Activated CD4-positive, alpha-beta memory T cell treated with anti-CD3 and anti-CD28 coated beads for 36 hours (primary cell): ENCODE measurements at regions of chr5 and their contacts with region 1.

Region 1: DNA sequence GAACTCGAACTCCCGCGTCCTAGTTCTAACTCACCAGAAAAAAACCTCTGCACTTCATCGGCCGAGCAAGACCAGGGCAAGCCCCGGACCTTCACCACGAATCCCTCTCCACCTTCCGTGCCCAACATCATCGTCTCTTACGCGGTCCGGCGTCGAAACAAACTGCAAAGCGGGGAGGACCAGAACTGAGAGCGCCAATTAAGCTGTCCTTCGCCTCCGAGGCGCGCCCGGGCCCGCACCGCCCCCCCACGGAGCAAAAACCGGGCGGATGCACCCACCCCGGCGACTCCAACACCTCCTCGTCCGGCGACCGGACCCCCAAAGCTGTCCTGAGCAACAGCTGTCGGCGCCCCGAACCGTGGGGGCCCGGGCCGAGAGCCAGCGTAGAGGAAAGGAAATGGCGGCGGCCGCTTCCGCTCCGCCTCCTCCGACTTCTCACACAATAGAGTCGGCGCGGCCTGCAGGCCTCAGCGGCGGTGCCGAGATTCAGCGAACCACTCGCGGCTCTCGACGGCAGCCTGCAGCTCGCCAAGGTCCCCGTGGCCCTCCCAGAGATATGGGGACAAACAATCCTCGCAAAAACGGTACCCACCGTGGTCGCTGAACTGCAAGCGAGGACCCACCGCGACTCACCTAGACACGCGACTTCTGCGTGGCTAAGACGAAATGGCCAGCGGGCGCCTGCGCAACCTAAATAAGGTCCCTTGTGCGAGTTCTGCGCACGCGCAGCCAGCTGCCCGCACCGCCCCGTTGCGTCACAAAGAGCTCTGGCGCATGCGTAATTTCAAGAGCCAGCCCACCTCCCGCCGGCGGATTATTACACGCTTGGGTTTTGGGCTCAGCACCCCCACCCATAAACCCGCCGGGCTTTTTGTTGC is at the start of gene HNRNPH1:
- DNase-seq: peak; percentile 99
- H3K4me3 Mint-ChIP-seq: peak within 1 kb of the TSS; percentile 98
- H3K27ac Mint-ChIP-seq: peak within 1 kb of the TSS; percentile 99
- H3K4me1 Mint-ChIP-seq: peaks cover 35% of the 10 kb centered on the region
- H3K27me3 Mint-ChIP-seq: no peaks in the 10 kb centered on the region
- total RNA-seq, gene HNRNPH1: 604 to 611 TPM

Region 2: DNA sequence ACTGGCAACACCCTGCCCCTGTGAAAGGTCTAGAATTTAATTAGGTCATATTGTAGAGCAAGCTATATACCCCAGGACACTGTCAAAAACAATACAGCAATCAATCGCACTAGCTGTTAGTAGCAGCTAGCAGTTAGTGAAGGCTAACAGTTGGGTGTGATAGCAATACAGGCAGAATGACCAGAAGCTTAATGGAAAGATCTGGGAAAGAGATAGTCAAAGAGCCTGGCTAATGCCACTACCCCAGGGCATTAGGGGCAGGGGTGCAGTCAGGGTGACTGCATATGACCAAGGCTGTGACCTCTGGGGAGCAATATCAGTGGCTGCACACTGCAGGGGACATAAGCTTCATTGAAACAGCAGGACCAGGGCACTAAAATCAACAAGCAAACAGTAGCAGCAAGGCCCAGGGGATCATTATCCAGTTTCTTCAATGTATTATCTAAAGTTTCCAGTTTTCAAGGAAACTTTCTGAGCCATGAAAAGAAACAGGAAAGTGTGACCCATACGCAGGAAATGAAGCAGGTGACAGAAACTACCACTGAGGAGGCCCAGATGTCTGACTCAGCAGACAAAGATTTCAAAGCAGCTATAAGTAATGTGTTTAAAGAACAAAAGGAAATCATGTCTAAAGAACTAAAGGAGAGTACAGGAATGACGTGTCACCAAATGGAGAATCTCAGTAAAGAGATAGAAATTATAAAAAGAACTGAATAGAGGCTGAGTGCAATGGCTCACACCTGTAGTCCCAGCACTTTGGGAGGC is 480.6 kb before region 1 on chr5:
- CTCF ChIA-PET with region 1: no interaction called
- POLR2A ChIA-PET with region 1: no interaction called
- intact Hi-C with region 1: loop called (anchors 10 kb)
- DNase-seq: peak; percentile 61
- H3K4me3 Mint-ChIP-seq: no peak overlapping the region
- H3K27ac Mint-ChIP-seq: peak overlapping the region; percentile 77
- H3K4me1 Mint-ChIP-seq: peaks cover 26% of the 10 kb centered on the region
- H3K27me3 Mint-ChIP-seq: no peaks in the 10 kb centered on the region

Region 3: GRCh38 chr5:179559284-179560252 is 63.7 kb before region 1 on chr5:
- CTCF ChIA-PET with region 1: interaction called, 5 read pairs
- POLR2A ChIA-PET with region 1: interaction called, 7 read pairs
- intact Hi-C with region 1: loop called (anchors 1 kb)
- DNase-seq: peak; percentile 97
- H3K4me3 Mint-ChIP-seq: peak overlapping the region; percentile 85
- H3K27ac Mint-ChIP-seq: peak overlapping the region; percentile 86
- H3K4me1 Mint-ChIP-seq: peaks cover 17% of the 10 kb centered on the region
- H3K27me3 Mint-ChIP-seq: no peaks in the 10 kb centered on the region

Region 4: DNA sequence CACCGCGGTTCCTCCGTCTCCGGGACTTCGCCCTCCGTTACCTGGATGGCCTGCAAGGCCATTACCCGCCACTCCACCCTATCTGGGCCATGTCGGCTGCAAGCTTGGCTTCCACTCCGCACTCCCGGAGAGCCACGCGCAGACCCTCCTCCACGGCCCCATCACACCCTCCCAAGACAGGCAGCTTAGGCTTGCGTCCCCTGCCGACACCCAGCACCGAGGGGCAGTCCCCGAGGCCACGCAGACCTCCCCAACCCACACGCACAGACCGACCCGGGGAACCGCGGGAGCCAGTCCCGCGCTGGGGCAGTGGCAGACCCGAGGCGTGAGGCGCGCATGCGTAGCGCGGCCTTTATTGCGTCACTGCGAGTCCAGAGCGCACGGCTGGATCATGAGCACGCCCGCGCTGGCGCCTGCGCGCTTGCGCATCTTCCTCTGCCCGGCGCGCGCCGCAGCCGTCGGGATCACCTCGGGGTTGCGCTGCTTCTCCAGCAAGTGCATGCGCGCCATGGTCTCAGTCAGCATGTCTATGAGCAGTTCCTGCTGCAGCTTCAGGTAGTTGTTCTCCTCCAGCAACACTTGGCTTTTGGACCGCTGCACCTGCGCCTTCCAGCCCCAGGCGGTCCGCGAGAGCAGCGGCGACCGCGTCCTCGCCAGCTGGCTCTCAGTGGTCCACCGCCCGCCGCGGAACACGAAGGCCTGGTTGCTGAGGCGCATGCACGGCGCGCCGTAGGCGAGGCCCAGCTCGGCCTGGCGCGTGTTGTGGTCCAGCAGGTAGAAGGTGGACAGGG is 55.2 kb after region 1 on chr5:
- CTCF ChIA-PET with region 1: interaction called, 3 read pairs
- POLR2A ChIA-PET with region 1: interaction called, 45 read pairs
- intact Hi-C with region 1: loop called (anchors 1 kb)
- DNase-seq: peak; percentile 96
- H3K4me3 Mint-ChIP-seq: peak overlapping the region; percentile 94
- H3K27ac Mint-ChIP-seq: peak overlapping the region; percentile 93
- H3K4me1 Mint-ChIP-seq: peaks cover 24% of the 10 kb centered on the region
- H3K27me3 Mint-ChIP-seq: no peaks in the 10 kb centered on the region

Region 5: GRCh38 chr5:179732417-179732917 is 109.2 kb after region 1 on chr5 and contains the start of gene MAML1:
- CTCF ChIA-PET with region 1: interaction called, 8 read pairs
- POLR2A ChIA-PET with region 1: interaction called, 28 read pairs
- intact Hi-C with region 1: loop called (anchors 1 kb)
- DNase-seq: peak; percentile 100
- H3K4me3 Mint-ChIP-seq: peak within 1 kb of the TSS; percentile 98
- H3K27ac Mint-ChIP-seq: peak within 1 kb of the TSS; percentile 92
- H3K4me1 Mint-ChIP-seq: peaks cover 42% of the 10 kb centered on the region
- H3K27me3 Mint-ChIP-seq: no peaks in the 10 kb centered on the region
- total RNA-seq, gene MAML1: 20.3 to 22.2 TPM

Region 6: DNA sequence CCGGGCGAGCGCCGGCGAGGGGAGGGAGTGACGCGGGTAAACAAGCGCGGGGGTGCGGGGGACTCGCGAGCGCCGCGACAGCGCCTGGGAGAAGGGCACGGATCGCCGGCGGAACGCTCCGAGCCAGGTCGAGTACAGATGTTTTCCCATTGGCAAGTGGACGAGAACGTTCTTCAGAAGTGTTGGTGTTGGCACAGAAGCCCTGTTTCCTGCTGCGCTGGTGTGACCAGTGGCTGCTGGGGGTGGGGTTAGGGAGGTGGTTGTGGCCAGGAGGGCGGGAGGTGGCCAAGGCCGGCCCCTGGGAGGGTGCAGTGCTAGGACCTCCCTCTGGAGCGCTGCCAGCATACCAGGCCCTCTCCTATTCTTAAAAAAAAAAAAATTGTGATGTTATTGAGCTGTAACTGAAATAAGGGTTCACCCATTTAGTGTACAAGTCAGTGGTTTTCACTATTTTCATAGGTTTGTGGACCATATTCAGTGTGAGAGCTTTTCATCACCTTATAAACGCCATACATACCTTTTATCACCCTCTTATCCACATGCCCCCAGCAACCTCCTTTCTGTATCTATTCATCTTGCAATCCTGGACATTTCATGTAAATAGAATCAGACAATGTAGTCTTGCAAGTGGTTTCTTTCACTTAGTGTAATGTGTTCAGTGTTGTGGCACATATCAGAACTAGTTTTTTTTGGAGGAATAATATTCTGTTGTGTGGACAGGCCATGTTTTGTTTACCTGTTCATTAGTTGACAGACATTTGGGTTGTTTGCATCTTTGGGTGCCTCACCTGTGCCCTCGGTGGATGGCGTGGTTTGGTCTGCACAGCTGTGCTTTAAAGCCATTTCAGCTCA is 198.6 kb after region 1 on chr5:
- CTCF ChIA-PET with region 1: no interaction called
- POLR2A ChIA-PET with region 1: interaction called, 3 read pairs
- intact Hi-C with region 1: loop called (anchors 5 kb)
- DNase-seq: peak; percentile 92
- H3K4me3 Mint-ChIP-seq: peak overlapping the region; percentile 90
- H3K27ac Mint-ChIP-seq: peak overlapping the region; percentile 95
- H3K4me1 Mint-ChIP-seq: peaks cover 49% of the 10 kb centered on the region
- H3K27me3 Mint-ChIP-seq: no peaks in the 10 kb centered on the region